Esophagus squamous epithelium (tissue), 5 donors: ENCODE measurements at regions of chr18 and their contacts with region 1.

Region 1: DNA sequence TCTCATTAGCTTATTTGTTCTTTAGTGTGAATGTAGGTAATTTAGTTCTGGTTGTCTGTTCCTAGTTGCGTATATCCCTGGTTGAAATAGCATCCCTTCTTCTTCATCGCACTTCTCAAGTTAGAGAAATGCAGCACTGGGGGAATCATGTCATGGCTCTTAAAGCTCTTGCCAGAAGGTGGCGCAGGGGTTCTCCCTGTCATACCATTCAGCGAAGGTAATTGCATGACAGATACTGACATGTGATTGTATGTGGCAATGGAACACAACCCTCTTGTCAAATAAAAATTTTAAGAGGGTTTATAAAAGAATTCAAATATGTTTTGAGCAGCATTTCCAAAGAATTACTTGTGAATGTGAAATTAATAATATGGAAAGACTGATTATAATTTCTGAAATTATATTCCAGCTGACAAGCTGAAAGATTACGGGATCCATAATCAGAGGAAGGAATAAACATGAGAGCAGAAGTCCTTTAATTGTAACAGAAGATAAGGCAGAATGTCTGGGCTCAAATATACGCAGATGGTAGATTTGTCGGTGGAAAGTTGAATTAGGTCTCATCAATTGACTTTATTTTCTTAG is 411.7 kb downstream of the DSEL start:
- DNase-seq: no peak
- H3K4me3 ChIP-seq: no peak overlapping the region
- H3K27ac ChIP-seq: no peak overlapping the region
- H3K4me1 ChIP-seq: no peaks in the 10 kb centered on the region
- H3K27me3 ChIP-seq: no peaks in the 10 kb centered on the region
- CTCF ChIP-seq: peak in 5 of 6 experiments; percentile 20 to 49 (median 42)
- POLR2A ChIP-seq: no peak

Region 2: DNA sequence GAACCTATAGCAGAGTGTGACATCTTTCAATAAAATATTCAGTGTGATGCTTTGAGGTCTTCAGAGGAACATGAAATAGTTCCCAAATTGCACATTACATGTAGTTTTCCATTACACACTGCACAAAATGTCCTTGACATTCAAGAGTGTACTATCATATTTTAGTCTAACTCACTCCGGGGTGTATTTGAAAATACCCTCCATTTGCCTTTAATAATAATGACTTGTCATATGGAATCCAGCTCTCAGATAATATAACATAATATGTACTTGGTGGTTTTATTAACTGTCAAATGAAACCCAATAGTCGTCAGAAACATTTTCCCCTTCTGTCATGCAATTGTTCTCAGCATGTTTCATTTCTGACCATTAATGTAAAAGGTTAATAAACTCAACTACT is 324.2 kb before region 1 on chr18:
- intact Hi-C with region 1: no loop called
- DNase-seq: no peak
- H3K4me3 ChIP-seq: no peak overlapping the region
- H3K27ac ChIP-seq: no peak overlapping the region
- H3K4me1 ChIP-seq: no peaks in the 10 kb centered on the region
- H3K27me3 ChIP-seq: no peaks in the 10 kb centered on the region
- CTCF ChIP-seq: no peak
- POLR2A ChIP-seq: no peak

Region 3: GRCh38 chr18:67199993-67200617 is 95.3 kb after region 1 on chr18:
- intact Hi-C with region 1: loop called (anchors 10 kb)
- DNase-seq: no peak
- H3K4me3 ChIP-seq: no peak overlapping the region
- H3K27ac ChIP-seq: no peak overlapping the region
- H3K4me1 ChIP-seq: no peaks in the 10 kb centered on the region
- H3K27me3 ChIP-seq: peaks cover 0 to 10% (median 0%) of the 10 kb centered on the region in 4 donors
- CTCF ChIP-seq: peak in 5 of 6 experiments; percentile 25 to 59 (median 51)
- POLR2A ChIP-seq: no peak